Caco-2 (cell line): ENCODE measurements at regions of chr4 and their contacts with region 1.

Region 1: DNA sequence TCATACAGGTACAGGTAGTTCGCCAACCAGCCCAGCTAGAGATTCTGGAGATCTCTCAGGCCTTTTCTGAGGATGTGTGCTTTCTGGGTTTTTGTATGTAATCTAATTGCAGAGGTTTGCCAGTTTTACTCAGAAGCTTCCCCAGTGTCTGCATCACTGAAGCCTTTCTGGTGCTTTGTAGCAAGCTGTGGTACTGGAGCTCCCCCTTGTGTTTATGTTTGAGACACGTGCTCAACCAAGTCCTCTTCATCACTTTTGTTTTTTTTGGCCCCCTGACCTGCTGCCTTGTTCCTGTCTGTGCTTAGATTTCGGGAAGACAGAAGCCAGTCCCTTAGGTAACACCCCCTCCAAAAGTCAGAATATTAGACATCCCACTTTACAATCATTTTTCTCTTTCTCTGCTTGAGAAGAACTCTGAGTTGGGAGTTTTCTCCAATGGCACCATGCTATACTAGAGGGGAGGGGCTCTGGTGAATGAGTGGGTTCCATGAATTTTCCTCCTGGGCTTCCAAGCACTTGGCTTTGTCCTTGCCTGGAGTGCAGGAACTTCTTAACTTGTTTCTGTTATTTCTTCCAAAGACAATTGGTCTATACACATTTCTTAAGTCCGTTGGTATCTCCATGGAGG is 128.4 kb upstream of the TBC1D9 start:
- DNase-seq: peak; percentile 66 to 73
- H3K4me3 ChIP-seq: no peak overlapping the region
- H3K4me3 Mint-ChIP-seq: no peak overlapping the region
- H3K27ac Mint-ChIP-seq: no peak overlapping the region
- H3K4me1 ChIP-seq: no peaks in the 10 kb centered on the region
- H3K4me1 Mint-ChIP-seq: no peaks in the 10 kb centered on the region
- H3K27me3 ChIP-seq: no peaks in the 10 kb centered on the region
- H3K27me3 Mint-ChIP-seq: peaks cover 4% of the 10 kb centered on the region
- CTCF ChIP-seq: peak; percentile 73 to 75

Region 2: DNA sequence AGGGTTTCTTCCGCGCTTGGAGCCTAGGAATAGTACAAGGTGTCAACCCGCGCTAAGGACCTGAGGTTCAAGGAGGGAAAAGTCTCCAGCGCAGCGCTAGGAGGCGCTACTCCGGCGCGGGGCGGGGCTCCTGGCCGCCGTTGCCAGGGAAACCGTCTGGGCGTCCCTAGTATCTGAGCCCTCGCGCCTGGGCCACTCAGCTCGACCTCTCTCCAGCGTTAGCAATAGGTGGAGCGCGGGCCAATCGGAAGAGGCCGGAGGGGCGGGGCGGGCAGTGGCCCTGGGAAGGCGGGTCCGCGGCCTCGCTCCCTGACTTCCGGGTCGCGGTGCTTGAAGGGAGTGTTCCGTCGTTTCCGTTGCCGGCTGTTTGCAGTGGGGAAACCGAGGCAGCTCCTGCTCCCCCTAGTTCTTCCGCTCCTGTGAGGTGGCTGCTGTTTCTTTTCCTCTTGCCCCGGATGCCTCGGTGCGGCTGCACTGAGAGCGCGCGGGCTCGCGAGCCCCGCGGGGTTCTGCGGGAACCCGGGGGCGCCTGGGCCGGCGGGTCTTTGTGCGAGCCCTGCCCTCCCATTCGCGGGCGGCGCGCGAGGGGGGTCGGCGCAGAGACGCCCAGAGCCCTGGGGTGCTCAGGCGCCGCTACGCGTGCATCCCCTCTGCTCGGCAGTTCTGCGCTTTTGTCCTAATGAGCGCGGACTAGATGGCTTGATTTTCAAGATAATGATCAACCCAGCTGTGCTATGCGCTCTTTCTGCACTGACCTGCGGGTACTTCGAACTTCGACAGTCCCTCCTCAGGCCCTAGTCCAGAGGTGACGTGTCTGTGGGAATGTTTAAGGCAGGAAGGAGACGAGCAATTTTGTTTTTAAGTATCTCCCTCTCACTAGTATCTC is 360.4 kb before region 1 on chr4 and contains the start of gene ELMOD2:
- CTCF ChIA-PET with region 1: no interaction called
- POLR2A ChIA-PET with region 1: no interaction called
- intact Hi-C with region 1: no loop called
- DNase-seq: peak; percentile 97 to 98
- H3K4me3 ChIP-seq: peak within 1 kb of the TSS; percentile 85
- H3K4me3 Mint-ChIP-seq: peak within 1 kb of the TSS; percentile 75
- H3K27ac Mint-ChIP-seq: peak within 1 kb of the TSS; percentile 39
- H3K4me1 ChIP-seq: peaks cover 5% of the 10 kb centered on the region; the same call in 1 of the 2 replicates
- H3K4me1 Mint-ChIP-seq: peaks cover under 1% of the 10 kb centered on the region
- H3K27me3 ChIP-seq: no peaks in the 10 kb centered on the region
- H3K27me3 Mint-ChIP-seq: no peaks in the 10 kb centered on the region
- CTCF ChIP-seq: peak; percentile 85 to 90
- total RNA-seq, gene ELMOD2: 26.2 and 28.1 TPM in 2 replicates

Region 3: DNA sequence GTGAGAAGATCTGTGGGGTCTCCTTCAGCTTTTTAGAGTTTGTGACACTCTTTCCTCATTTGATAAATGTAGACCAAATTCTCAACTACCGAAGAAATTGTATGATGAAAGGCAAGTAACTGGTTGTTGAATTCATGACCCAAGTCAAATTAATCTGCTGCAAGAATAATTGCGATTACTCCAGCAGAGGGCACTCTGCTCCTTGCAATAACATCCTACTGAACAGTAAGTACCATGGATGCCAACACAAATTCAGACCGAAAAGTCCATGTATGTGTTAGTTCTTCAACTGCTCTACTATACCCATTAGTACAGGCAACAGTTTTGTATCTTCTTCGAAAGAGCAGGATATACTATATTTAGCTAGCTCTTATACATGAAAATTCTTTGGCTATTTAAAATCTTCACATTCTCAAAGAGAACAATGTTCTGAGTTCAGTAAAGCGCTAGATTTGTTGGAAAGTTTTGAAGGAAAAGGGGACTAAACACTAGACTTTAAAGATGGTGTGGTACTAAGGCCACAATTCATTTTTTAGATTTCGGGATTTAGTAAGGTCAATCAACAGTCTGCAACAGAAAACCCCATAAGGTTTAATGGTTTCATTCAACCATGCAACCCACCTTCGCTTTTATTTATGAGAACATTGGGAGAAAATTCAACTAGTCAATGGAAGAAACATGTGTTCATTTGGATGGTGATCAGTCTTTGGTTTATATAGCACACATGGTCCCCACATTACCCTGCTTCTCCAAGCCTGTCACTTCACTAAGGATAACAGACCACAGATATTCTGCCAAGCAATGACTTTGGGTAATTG is 23.0 kb before region 1 on chr4:
- CTCF ChIA-PET with region 1: interaction called, 15 read pairs
- POLR2A ChIA-PET with region 1: interaction called, 8 read pairs
- intact Hi-C with region 1: loop called (anchors 1 kb)
- DNase-seq: peak; percentile 44 to 64
- H3K4me3 ChIP-seq: no peak overlapping the region
- H3K4me3 Mint-ChIP-seq: no peak overlapping the region
- H3K27ac Mint-ChIP-seq: no peak overlapping the region
- H3K4me1 ChIP-seq: no peaks in the 10 kb centered on the region
- H3K4me1 Mint-ChIP-seq: peaks cover 7% of the 10 kb centered on the region
- H3K27me3 ChIP-seq: no peaks in the 10 kb centered on the region
- H3K27me3 Mint-ChIP-seq: peaks cover 13% of the 10 kb centered on the region
- CTCF ChIP-seq: peak; percentile 62 to 70

Region 4: DNA sequence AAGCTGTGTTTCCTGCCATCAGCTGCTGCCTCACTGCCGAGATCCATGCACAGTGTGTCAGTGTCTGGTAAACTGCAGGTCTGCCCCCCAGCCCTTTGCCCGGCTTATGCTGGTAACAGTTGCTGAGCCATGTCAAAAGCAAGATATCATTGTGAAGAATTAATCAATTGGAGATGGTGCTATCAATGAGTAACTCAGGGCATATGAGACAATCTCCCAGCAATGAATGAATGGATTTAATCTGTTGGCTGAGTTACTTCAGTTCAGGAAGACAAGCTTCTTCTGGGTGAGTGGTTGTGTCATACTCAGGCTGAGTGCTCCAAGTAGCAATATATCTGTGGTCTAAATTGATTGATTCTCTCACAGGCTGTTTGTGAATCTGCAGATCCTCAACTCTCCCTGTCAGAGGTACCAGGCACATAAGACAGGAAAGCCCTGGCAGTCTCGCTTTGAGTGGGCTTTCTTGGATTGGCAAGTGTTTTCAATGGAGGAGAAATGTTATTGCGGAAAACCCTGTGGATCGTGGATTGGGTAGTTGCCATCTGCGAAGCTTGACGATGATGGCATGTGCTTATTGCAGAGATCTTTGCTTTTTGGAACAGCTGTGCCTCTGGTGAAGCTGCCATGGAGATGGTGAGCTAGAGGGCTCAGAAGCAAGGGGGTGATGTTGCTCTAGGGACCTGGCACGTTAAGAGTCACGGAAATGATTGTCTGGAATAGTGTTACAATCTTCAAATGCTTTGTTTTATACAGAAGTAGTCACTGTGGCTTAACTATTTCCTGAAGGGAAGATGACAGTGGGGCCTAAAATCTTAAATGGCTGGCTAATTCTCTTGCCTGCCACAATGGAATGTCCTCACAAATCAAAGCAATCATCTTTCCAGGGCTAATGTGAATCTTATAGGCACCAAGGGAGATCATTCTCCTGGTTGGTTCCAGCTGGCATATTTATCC is 19.3 kb after region 1 on chr4:
- CTCF ChIA-PET with region 1: no interaction called
- POLR2A ChIA-PET with region 1: no interaction called
- intact Hi-C with region 1: no loop called
- DNase-seq: no peak
- H3K4me3 ChIP-seq: no peak overlapping the region
- H3K4me3 Mint-ChIP-seq: no peak overlapping the region
- H3K27ac Mint-ChIP-seq: no peak overlapping the region
- H3K4me1 ChIP-seq: no peaks in the 10 kb centered on the region
- H3K4me1 Mint-ChIP-seq: no peaks in the 10 kb centered on the region
- H3K27me3 ChIP-seq: no peaks in the 10 kb centered on the region
- H3K27me3 Mint-ChIP-seq: peaks cover 11% of the 10 kb centered on the region
- CTCF ChIP-seq: no peak

Region 5: GRCh38 chr4:140963883-140964282 is 79.3 kb after region 1 on chr4:
- CTCF ChIA-PET with region 1: no interaction called
- POLR2A ChIA-PET with region 1: no interaction called
- intact Hi-C with region 1: loop called (anchors 5 kb)
- DNase-seq: no peak
- H3K4me3 ChIP-seq: no peak overlapping the region
- H3K4me3 Mint-ChIP-seq: no peak overlapping the region
- H3K27ac Mint-ChIP-seq: no peak overlapping the region
- H3K4me1 ChIP-seq: no peaks in the 10 kb centered on the region
- H3K4me1 Mint-ChIP-seq: no peaks in the 10 kb centered on the region
- H3K27me3 ChIP-seq: no peaks in the 10 kb centered on the region
- H3K27me3 Mint-ChIP-seq: peaks cover 6% of the 10 kb centered on the region
- CTCF ChIP-seq: no peak